ENCODE measurements at regions of chr18 and their contacts with region 1.

Region 1: GRCh38 chr18:6056146-6056932 is 161.0 kb upstream of the TMEM200C start:
- DNase-seq: peak; percentile 69
- ATAC-seq: peak; percentile 78
- H3K4me3 ChIP-seq: peak overlapping the region; percentile 36
- H3K27ac ChIP-seq: peak overlapping the region; percentile 97
- H3K4me1 ChIP-seq: peaks cover 47% of the 10 kb centered on the region
- H3K27me3 ChIP-seq: no peaks in the 10 kb centered on the region
- CTCF ChIP-seq: no peak

Region 2: DNA sequence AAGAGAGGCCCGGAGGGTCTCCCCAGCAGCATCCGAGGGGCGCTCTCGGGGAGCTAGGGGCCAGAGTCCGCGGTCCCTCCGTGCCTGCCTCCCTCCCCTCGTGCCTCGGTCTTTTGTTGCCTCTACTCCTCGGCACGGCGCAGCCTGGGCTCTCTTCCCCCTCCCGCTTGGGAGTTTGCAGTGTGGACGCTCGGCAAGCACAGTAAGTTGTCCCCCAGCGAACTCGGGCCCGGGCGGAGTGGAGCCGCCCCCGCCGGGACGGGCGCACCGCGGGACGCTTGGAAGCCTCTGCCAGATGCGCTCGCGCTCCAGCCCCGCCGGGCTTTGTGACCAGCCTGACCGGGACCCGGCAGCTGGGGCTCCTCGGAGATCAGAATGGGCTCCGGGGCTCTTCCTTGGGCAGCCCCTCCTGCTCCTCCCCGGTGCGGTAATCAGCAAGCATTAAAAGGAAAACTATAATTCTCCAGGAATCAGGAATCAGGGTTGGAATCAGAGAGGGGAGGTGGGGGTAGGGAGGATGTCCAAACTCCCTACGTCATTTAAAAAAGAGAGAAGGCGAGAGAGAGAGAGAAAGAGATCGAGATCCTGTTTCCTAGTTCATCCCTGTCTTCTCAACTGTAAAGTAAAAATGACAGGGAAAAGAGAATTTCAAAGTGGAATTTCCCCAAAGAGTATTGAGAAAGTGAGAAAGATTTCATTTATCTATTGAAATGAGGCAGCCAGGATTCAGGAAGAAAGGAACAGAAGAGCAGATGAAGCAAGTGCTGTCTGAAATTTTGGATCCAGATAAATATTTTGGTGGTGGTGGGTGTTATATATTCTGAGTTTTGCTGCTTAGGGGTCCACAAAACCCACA is 160.2 kb before region 1 on chr18:
- CTCF ChIA-PET with region 1: no interaction called
- POLR2A ChIA-PET with region 1: no interaction called
- intact Hi-C with region 1: loop called (anchors 5 kb)
- DNase-seq: peak; percentile 55
- ATAC-seq: peak; percentile 46
- H3K4me3 ChIP-seq: peak overlapping the region; percentile 68
- H3K27ac ChIP-seq: 0 out of 2 replicates have a peak overlapping the region, but pooled peaks have one; percentile 4
- H3K4me1 ChIP-seq: peaks cover 19% of the 10 kb centered on the region
- H3K27me3 ChIP-seq: peaks cover 33% of the 10 kb centered on the region
- CTCF ChIP-seq: no peak

Region 3: DNA sequence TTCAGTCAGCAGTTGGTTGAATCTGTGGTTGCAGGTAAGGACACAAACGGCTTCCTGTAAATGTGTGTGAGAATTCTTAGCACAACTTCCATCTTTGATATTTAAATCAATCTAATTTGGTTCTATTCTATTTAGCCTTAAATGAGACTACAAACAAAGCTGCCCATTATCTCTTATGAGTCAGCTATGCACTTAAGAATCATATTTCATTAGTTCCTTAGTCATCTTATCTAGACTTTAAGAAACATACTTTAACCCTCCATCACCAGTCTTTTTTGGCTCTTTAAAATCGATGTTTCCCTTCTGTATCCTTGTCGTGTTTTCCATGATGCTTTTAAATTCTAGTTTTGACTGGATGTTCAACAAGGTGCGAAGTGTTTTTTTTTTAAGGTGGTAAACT is 46.6 kb before region 1 on chr18:
- CTCF ChIA-PET with region 1: no interaction called
- POLR2A ChIA-PET with region 1: no interaction called
- intact Hi-C with region 1: loop called (anchors 2 kb)
- DNase-seq: peak; percentile 77
- ATAC-seq: peak; percentile 90
- H3K4me3 ChIP-seq: peak overlapping the region; percentile 40; the same call in 1 of the 2 replicates
- H3K27ac ChIP-seq: peak overlapping the region; percentile 76
- H3K4me1 ChIP-seq: peaks cover 20% of the 10 kb centered on the region
- H3K27me3 ChIP-seq: no peaks in the 10 kb centered on the region
- CTCF ChIP-seq: no peak

Region 4: DNA sequence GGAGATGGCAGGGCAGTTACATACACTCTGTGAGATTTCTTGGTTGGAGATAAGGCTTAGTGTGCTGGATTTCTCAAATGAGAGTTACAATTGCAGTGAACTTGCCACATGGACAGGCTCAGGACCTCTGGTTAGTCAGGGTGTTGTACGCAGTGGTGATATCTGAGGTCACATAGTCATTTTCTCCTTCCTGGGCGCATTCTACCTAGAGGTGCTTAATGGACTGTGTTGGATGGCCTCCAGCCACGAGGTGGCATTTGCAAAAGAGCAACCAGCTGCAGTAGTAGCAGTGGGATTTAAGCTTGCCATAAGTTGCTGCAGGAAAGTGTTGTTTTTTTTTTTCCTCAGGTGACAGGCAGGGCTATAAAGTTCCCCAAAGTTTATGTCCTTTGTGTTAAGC is 12.8 kb after region 1 on chr18:
- CTCF ChIA-PET with region 1: no interaction called
- POLR2A ChIA-PET with region 1: no interaction called
- intact Hi-C with region 1: loop called (anchors 1 kb)
- DNase-seq: peak; percentile 56
- ATAC-seq: peak; percentile 10
- H3K4me3 ChIP-seq: peak overlapping the region; percentile 5
- H3K27ac ChIP-seq: peak overlapping the region; percentile 91
- H3K4me1 ChIP-seq: peaks cover 45% of the 10 kb centered on the region
- H3K27me3 ChIP-seq: no peaks in the 10 kb centered on the region
- CTCF ChIP-seq: 0 out of 2 replicates have a peak, but pooled peaks have one; percentile 24

Region 5: DNA sequence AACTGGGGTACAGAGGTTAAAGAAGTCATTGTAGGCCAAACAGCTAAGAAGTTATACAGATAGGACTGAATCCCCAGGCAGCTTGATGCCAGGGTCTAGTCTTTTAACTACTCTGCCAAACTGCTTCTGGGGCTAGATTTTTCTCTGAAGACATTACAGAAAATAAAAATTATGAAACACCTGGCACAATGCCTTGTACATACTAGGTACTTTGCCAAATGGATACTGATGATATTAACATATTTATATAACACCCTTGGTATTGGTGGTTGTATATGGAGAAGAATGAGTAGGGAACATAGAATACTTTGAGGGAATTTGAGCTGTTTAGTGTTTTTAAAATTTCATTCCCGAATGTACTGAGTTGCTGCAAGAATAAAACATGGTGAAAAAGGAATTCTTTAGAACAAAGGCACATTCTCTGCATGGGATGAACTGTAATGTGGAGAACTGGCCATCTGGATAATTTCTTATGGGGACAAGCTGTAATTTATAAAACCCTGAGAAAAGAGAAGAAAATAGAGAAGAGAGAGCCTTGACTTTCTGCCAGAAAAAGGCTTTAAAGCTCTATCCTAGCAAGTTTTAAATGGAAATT is 49.8 kb after region 1 on chr18:
- CTCF ChIA-PET with region 1: no interaction called
- POLR2A ChIA-PET with region 1: no interaction called
- intact Hi-C with region 1: no loop called
- DNase-seq: no peak
- ATAC-seq: no peak
- H3K4me3 ChIP-seq: no peak overlapping the region
- H3K27ac ChIP-seq: no peak overlapping the region
- H3K4me1 ChIP-seq: no peaks in the 10 kb centered on the region
- H3K27me3 ChIP-seq: no peaks in the 10 kb centered on the region
- CTCF ChIP-seq: no peak

Region 6: DNA sequence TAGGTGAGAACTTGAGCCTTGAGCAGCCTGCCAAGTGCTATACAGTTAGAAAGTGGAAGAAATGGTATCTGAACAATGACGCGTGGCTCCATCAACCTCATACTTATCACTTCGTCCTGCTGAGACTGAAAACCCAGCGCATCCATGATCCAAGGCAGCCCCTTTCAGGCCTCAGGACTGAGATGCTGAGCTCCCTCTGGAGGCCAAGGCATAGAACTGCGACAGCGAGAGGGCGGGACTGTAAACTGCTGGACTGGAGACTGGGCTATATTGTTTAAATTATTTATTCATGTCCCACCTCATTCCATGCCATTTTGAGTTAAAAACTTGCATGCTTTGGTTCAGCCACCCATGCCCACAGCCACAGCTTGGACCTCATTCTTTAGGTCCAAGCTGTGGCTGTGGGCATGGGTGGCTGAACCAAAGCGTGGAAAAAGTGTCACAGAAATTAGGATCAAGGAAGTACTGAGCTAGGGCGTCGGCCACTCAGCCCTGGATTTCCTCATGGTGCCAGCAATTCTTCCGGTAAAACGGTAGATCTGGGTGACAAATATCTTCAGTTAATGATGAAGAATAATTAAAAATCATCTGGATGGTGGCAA is 162.9 kb after region 1 on chr18:
- CTCF ChIA-PET with region 1: no interaction called
- POLR2A ChIA-PET with region 1: no interaction called
- intact Hi-C with region 1: loop called (anchors 5 kb)
- DNase-seq: peak; percentile 78
- ATAC-seq: peak; percentile 89
- H3K4me3 ChIP-seq: no peak overlapping the region
- H3K27ac ChIP-seq: no peak overlapping the region
- H3K4me1 ChIP-seq: no peaks in the 10 kb centered on the region
- H3K27me3 ChIP-seq: no peaks in the 10 kb centered on the region
- CTCF ChIP-seq: peak; percentile 84

Measured in PC-3 (cell line).